ENCODE measurements at regions of chr3 and their contacts with region 1.

Region 1: GRCh38 chr3:113151461-113152031 is 59.8 kb upstream of the BOC start:
- DNase-seq: no peak
- ATAC-seq: no peak
- H3K4me3 ChIP-seq: no peak overlapping the region
- H3K4me3 Mint-ChIP-seq: no peak overlapping the region
- H3K27ac ChIP-seq: no peak overlapping the region
- H3K27ac Mint-ChIP-seq: no peak overlapping the region
- H3K4me1 ChIP-seq: no peaks in the 10 kb centered on the region
- H3K4me1 Mint-ChIP-seq: no peaks in the 10 kb centered on the region
- H3K27me3 ChIP-seq: no peaks in the 10 kb centered on the region
- H3K27me3 Mint-ChIP-seq: no peaks in the 10 kb centered on the region
- CTCF ChIP-seq: no peak

Region 2: DNA sequence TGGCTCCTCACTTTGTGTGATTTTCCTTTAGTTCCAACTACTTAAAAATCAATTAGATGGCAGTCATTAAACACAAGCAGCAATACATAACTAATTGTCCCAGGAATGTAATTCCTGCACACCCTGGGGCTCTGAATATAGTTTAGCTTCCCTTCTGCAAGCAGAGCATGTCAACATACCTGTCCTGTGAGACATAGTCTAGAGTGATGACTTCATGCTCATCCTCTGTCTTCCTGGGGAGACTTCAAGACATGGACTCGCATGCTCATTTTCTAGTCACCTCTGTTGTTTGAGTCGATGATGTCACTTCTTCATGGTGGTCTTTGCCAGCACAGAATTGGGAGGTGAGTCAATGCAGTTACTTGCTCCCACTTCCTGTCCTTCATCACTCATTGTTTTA is 1049.6 kb before region 1 on chr3:
- CTCF ChIA-PET with region 1: no interaction called
- POLR2A ChIA-PET with region 1: no interaction called
- intact Hi-C with region 1: loop called in 1 of 2 experiments (anchors 5 kb)
- DNase-seq: no peak
- ATAC-seq: no peak
- H3K4me3 ChIP-seq: no peak overlapping the region
- H3K4me3 Mint-ChIP-seq: no peak overlapping the region
- H3K27ac ChIP-seq: no peak overlapping the region
- H3K27ac Mint-ChIP-seq: no peak overlapping the region
- H3K4me1 ChIP-seq: no peaks in the 10 kb centered on the region
- H3K4me1 Mint-ChIP-seq: no peaks in the 10 kb centered on the region
- H3K27me3 ChIP-seq: no peaks in the 10 kb centered on the region
- H3K27me3 Mint-ChIP-seq: no peaks in the 10 kb centered on the region
- CTCF ChIP-seq: no peak

Region 3: DNA sequence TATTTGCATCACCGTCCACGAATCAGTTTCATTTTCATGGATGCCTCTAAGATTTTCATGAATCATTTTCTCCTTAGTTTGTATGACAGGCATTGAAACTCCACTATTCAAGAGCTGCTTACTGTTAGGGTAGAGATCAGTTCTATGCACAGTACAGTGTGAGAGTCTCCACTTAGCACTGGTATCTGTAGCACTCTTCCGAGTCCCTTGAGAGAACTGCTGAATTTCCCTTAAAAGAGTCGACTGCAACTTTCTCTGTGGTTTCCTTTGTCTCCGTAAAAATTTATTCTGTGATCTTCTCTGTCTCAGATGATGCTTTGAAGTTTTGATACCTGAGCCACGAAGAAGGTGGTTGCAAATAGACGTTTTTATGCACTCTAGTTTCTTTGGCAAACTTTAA is 145.9 kb before region 1 on chr3:
- CTCF ChIA-PET with region 1: no interaction called
- POLR2A ChIA-PET with region 1: no interaction called
- intact Hi-C with region 1: no loop called
- DNase-seq: peak in 3 of 9 experiments; percentile 21 to 82 (median 67)
- ATAC-seq: peak; percentile 81
- H3K4me3 ChIP-seq: peak overlapping the region in 1 of 2 experiments; percentile 12
- H3K4me3 Mint-ChIP-seq: peak overlapping the region; percentile 75
- H3K27ac ChIP-seq: peak overlapping the region; percentile 42 to 64
- H3K27ac Mint-ChIP-seq: peak overlapping the region; percentile 96
- H3K4me1 ChIP-seq: peaks cover 44% of the 10 kb centered on the region
- H3K4me1 Mint-ChIP-seq: peaks cover 81% of the 10 kb centered on the region
- H3K27me3 ChIP-seq: no peaks in the 10 kb centered on the region
- H3K27me3 Mint-ChIP-seq: no peaks in the 10 kb centered on the region
- CTCF ChIP-seq: no peak